ENCODE measurements at regions of chr9 and their contacts with region 1.

Region 1: GRCh38 chr9:137156567-137157375 is 13.1 kb downstream of the LRRC26 start:
- DNase-seq: no peak
- ATAC-seq: peak; percentile 73
- H3K4me3 ChIP-seq: peak overlapping the region; percentile 39; the same call in 1 of the 2 replicates
- H3K27ac ChIP-seq: no peak overlapping the region
- H3K4me1 ChIP-seq: peaks cover 31% of the 10 kb centered on the region
- H3K27me3 ChIP-seq: no peaks in the 10 kb centered on the region
- CTCF ChIP-seq: no peak
- EP300 ChIP-seq: no peak
- POLR2A ChIP-seq: no peak
- RAD21 ChIP-seq: no peak

Region 2: GRCh38 chr9:137168905-137169856 is 12.4 kb after region 1 on chr9:
- CTCF ChIA-PET with region 1: no interaction called
- POLR2A ChIA-PET with region 1: interaction called, 37 read pairs
- RAD21 ChIA-PET with region 1: interaction called, 25 read pairs
- SMC1A ChIA-PET with region 1: interaction called, 3 read pairs
- in situ Hi-C with region 1: no loop called
- intact Hi-C with region 1: no loop called
- DNase-seq: no peak
- ATAC-seq: peak; percentile 79
- H3K4me3 ChIP-seq: peak overlapping the region; percentile 53; the same call in 1 of the 2 replicates
- H3K27ac ChIP-seq: no peak overlapping the region
- H3K4me1 ChIP-seq: peaks cover 8% of the 10 kb centered on the region; the same call in 1 of the 2 replicates
- H3K27me3 ChIP-seq: peaks cover 0 to 8% of the 10 kb centered on the region in 2 experiments; a peak in 3 of 4 replicates
- CTCF ChIP-seq: no peak
- EP300 ChIP-seq: no peak
- POLR2A ChIP-seq: no peak
- RAD21 ChIP-seq: no peak

Region 3: GRCh38 chr9:137182836-137183235 is 26.1 kb after region 1 on chr9:
- CTCF ChIA-PET with region 1: no interaction called
- POLR2A ChIA-PET with region 1: interaction called, 11 read pairs
- RAD21 ChIA-PET with region 1: interaction called, 18 read pairs
- SMC1A ChIA-PET with region 1: interaction called, 13 read pairs
- in situ Hi-C with region 1: no loop called
- intact Hi-C with region 1: no loop called
- DNase-seq: no peak
- ATAC-seq: no peak
- H3K4me3 ChIP-seq: no peak overlapping the region
- H3K27ac ChIP-seq: no peak overlapping the region
- H3K4me1 ChIP-seq: peaks cover 15% of the 10 kb centered on the region
- H3K27me3 ChIP-seq: no peaks in the 10 kb centered on the region
- CTCF ChIP-seq: no peak
- EP300 ChIP-seq: no peak
- POLR2A ChIP-seq: no peak
- RAD21 ChIP-seq: no peak

Region 4: GRCh38 chr9:137213160-137214060 is 56.6 kb after region 1 on chr9:
- CTCF ChIA-PET with region 1: no interaction called
- POLR2A ChIA-PET with region 1: no interaction called
- RAD21 ChIA-PET with region 1: no interaction called
- SMC1A ChIA-PET with region 1: no interaction called
- in situ Hi-C with region 1: no loop called
- intact Hi-C with region 1: no loop called
- DNase-seq: no peak
- ATAC-seq: no peak
- H3K4me3 ChIP-seq: no peak overlapping the region
- H3K27ac ChIP-seq: no peak overlapping the region
- H3K4me1 ChIP-seq: no peaks in the 10 kb centered on the region
- H3K27me3 ChIP-seq: no peaks in the 10 kb centered on the region
- CTCF ChIP-seq: peak in 1 of 3 experiments; percentile 3; a peak in 1 of 6 replicates
- EP300 ChIP-seq: no peak
- POLR2A ChIP-seq: peak; percentile 28; the same call in 1 of the 2 replicates
- RAD21 ChIP-seq: no peak

Region 5: DNA sequence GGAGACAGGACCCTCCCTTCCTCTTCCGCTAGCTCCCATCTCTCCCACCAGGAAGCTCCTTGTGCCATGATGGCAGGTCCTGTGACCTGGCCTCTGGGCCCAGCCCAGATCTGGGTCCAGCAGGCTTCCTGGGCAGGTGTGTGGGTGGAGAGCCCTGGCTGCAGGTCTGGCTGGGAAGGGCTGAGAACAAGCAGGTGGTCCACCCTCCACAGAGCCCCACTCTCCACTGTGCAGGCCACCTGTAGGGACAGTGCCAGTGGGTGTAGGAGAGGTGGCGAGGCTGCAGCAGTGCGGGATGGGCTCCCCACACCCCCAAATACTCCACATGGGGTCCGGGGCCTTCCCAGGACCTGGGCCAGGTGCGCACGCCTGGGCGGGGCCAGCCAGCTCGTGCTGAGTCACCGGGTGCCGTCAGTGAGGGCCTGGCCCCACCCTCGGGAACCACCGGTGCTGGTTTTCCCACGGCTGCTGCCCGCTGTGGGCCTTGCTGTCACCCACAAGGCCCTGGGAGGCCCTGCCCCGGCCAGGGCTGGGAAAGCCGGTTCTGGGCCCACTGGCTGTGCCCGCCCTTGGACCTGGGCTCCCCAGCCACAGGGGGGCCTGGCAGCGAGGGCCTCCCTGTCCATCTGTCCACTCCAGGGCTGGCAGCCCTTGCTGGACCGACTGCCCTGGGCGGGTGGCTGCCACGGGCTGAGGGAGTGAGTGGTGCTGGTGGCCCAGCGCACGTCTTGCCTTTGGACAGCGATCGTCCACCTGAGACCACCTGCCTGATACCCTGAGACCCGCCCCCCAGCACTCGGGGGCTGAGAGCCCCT is 154.6 kb after region 1 on chr9:
- CTCF ChIA-PET with region 1: no interaction called
- POLR2A ChIA-PET with region 1: no interaction called
- RAD21 ChIA-PET with region 1: no interaction called
- SMC1A ChIA-PET with region 1: no interaction called
- in situ Hi-C with region 1: no loop called
- intact Hi-C with region 1: no loop called
- DNase-seq: no peak
- ATAC-seq: no peak
- H3K4me3 ChIP-seq: no peak overlapping the region
- H3K27ac ChIP-seq: no peak overlapping the region
- H3K4me1 ChIP-seq: no peaks in the 10 kb centered on the region
- H3K27me3 ChIP-seq: no peaks in the 10 kb centered on the region
- CTCF ChIP-seq: no peak
- EP300 ChIP-seq: no peak
- POLR2A ChIP-seq: no peak
- RAD21 ChIP-seq: no peak